A549 (cell line): ENCODE measurements at regions of chr14 and their contacts with region 1.

Region 1: GRCh38 chr14:69505338-69506240 is 21.1 kb downstream of the PLEKHD1 start:
- DNase-seq: no peak
- ATAC-seq: no peak
- H3K4me3 ChIP-seq: no peak overlapping the region
- H3K27ac ChIP-seq: no peak overlapping the region
- H3K4me1 ChIP-seq: no peaks in the 10 kb centered on the region
- CTCF ChIP-seq: no peak
- EP300 ChIP-seq: no peak
- POLR2A ChIP-seq: no peak
- RAD21 ChIP-seq: no peak

Region 2: GRCh38 chr14:69483765-69484443 is 21.7 kb before region 1 on chr14:
- CTCF ChIA-PET with region 1: interaction called, 18 read pairs
- POLR2A ChIA-PET with region 1: no interaction called
- DNase-seq: peak; percentile 16 to 33
- ATAC-seq: peak; percentile 41 to 62; a peak in 5 of 6 replicates
- H3K4me3 ChIP-seq: peak overlapping the region; percentile 55
- H3K27ac ChIP-seq: peak overlapping the region in 1 of 2 experiments; percentile 30; a peak in 2 of 6 replicates
- H3K4me1 ChIP-seq: 0 out of 3 replicates have a peak, but pooled peaks cover 4% of the 10 kb centered on the region
- CTCF ChIP-seq: no peak
- EP300 ChIP-seq: no peak
- POLR2A ChIP-seq: no peak
- RAD21 ChIP-seq: no peak

Region 3: GRCh38 chr14:69493791-69494190 is 11.8 kb before region 1 on chr14:
- CTCF ChIA-PET with region 1: interaction called, 42 read pairs
- POLR2A ChIA-PET with region 1: interaction called, 7 read pairs
- DNase-seq: no peak
- ATAC-seq: no peak
- H3K4me3 ChIP-seq: no peak overlapping the region
- H3K27ac ChIP-seq: no peak overlapping the region
- H3K4me1 ChIP-seq: no peaks in the 10 kb centered on the region
- CTCF ChIP-seq: no peak
- EP300 ChIP-seq: no peak
- POLR2A ChIP-seq: no peak
- RAD21 ChIP-seq: no peak

Region 4: GRCh38 chr14:69519204-69520100 is 13.9 kb after region 1 on chr14:
- CTCF ChIA-PET with region 1: interaction called, 12 read pairs
- POLR2A ChIA-PET with region 1: no interaction called
- DNase-seq: no peak
- ATAC-seq: peak in 1 of 2 experiments; percentile 32; a peak in 2 of 6 replicates
- H3K4me3 ChIP-seq: no peak overlapping the region
- H3K27ac ChIP-seq: no peak overlapping the region
- H3K4me1 ChIP-seq: no peaks in the 10 kb centered on the region
- CTCF ChIP-seq: no peak
- EP300 ChIP-seq: no peak
- POLR2A ChIP-seq: no peak
- RAD21 ChIP-seq: no peak